ENCODE measurements at regions of chr4 and their contacts with region 1.

Region 1: GRCh38 chr4:7802093-7802726 is 137.5 kb downstream of the AFAP1 start:
- DNase-seq: peak; percentile 85
- ATAC-seq: peak; percentile 65

Region 2: DNA sequence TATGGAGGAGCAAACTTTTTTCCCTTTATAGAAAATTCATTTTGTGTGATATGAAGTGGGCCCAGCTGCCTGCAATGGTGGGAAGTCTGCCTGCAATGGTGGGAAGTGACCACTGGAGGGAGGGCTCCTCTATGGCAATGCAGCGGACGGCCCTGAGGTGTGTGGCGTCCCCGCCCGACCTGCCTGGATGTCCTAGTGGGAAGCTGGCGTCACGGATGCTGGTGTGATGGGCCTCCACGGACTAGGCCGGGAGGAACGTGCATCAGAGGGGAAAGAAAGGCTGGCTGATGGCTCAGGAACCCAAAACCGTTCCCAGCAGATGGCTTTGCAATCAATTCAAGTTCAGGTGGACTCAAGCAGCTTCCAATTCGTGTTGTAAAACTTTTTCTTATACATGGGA is 40.5 kb before region 1 on chr4:
- intact Hi-C with region 1: loop called (anchors 1 kb)
- DNase-seq: peak; percentile 89
- ATAC-seq: peak; percentile 89

Region 3: DNA sequence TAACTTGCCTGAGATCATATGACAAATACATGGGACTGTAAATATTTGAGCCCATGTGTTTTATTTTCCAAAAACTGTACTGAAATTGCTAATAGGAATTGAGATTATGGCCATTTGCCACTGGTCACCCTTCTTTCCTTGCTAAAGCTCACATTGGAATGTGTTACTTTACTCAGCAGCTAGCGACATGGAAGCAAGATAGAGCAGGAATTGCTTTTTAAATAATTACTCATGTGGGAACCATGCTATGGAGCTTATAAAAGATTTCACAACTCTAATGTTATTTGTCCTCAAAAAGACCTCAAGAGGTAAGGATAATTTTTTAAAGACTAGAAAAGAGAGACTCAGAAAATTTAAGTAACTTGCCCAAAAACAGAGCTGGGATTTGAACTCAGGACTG is 186.2 kb after region 1 on chr4:
- intact Hi-C with region 1: loop called (anchors 2 kb)
- DNase-seq: no peak
- ATAC-seq: no peak

Region 4: DNA sequence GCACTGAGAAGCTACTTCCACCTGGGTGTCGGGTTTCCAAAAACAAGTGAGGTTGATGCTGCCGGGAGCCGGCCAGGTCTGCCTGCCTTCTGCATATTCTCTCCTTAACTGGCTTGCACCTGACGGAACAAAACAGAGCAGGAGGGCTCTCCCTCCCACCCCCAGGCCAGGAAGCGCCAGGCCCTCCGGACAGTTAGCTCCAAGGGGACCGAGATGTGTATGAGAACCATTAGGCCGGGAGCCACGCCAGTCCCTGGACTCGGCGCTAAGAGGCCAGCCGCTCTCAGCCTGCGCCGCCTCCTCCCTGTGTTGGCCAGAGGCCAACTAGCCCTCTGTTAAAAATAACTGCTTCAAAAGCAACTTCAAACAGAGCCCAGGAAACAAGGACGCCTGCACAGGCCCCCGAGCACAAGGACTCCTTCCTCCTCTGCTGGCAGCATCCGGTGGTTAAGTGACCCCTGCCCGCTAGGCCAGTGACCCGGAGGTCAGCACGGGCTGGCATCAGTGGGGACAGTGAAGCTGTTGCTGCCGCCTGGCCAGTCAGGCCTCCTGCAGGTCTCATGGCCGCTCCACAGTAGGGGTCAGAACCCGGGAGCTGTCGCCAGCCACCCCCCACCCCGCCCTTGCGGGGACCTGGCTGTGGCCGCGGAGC is 248.5 kb after region 1 on chr4:
- intact Hi-C with region 1: no loop called
- DNase-seq: peak; percentile 91
- ATAC-seq: peak; percentile 93

Measured in Right ventricle myocardium superior (tissue), 1 donor.